Mammary epithelial cell (primary cell): ENCODE measurements at regions of chr1 and their contacts with region 1.

Region 1: GRCh38 chr1:47934243-47934805 is 62.9 kb downstream of the TRABD2B start:
- DNase-seq: no peak
- H3K4me3 ChIP-seq: no peak overlapping the region
- H3K27ac ChIP-seq: no peak overlapping the region
- H3K4me1 ChIP-seq: peaks cover 4% of the 10 kb centered on the region
- H3K27me3 ChIP-seq: no peaks in the 10 kb centered on the region
- CTCF ChIP-seq: no peak

Region 2: DNA sequence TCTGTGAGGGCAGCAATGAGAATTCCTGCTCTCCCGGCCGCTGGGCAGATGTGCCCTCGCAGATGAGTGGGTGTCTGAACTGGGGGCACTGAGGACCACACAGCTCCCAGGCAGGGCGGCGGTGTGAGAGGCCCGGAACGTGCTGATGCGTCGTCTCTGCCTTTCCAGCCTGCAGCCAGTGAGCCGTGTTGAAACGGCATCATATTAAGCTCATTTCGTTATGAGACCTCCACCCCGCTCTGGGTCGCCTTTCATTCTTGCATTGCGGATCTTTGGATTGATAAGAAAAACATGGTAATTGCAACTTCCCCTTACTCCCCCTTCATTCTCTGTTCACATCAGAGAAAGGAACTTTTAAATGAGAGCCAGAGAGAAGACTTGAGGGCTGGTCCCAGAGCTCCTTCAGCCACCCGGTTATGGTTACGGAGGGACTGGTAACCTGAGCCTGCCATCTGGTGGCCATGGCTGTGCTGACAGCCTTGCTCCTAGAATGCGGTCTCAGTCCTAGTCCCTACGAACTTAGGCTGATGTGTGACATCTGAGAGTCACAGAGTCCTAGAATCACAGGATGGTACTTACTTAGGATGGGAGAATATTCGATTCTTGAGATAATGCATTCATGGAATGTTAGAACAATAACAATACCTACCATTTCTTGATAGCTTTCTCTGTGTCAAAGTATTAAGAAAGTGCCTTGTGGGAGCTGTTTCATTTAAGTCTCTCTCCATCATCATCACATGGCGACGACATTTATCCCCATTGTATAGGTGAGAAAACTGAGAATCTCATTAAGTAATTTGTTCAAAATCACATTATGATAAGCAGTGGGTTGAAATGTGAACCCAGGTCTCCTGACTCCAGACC is 208.1 kb before region 1 on chr1:
- CTCF ChIA-PET with region 1: interaction called, 4 read pairs
- dilution Hi-C with region 1: no loop called
- in situ Hi-C with region 1: loop called (anchors 10 to 25 kb)
- intact Hi-C with region 1: no loop called
- DNase-seq: peak; percentile 58
- H3K4me3 ChIP-seq: peak overlapping the region in 1 of 3 experiments; percentile 8
- H3K27ac ChIP-seq: no peak overlapping the region
- H3K4me1 ChIP-seq: peaks cover 20% of the 10 kb centered on the region
- H3K27me3 ChIP-seq: no peaks in the 10 kb centered on the region
- CTCF ChIP-seq: peak; percentile 94

Region 3: GRCh38 chr1:47738560-47739182 is 195.7 kb before region 1 on chr1:
- CTCF ChIA-PET with region 1: interaction called, 7 read pairs
- dilution Hi-C with region 1: no loop called
- in situ Hi-C with region 1: loop called (anchors 10 to 25 kb)
- intact Hi-C with region 1: loop called (anchors 1 kb)
- DNase-seq: peak; percentile 32
- H3K4me3 ChIP-seq: no peak overlapping the region
- H3K27ac ChIP-seq: no peak overlapping the region
- H3K4me1 ChIP-seq: no peaks in the 10 kb centered on the region
- H3K27me3 ChIP-seq: no peaks in the 10 kb centered on the region
- CTCF ChIP-seq: peak; percentile 76 to 89

Region 4: DNA sequence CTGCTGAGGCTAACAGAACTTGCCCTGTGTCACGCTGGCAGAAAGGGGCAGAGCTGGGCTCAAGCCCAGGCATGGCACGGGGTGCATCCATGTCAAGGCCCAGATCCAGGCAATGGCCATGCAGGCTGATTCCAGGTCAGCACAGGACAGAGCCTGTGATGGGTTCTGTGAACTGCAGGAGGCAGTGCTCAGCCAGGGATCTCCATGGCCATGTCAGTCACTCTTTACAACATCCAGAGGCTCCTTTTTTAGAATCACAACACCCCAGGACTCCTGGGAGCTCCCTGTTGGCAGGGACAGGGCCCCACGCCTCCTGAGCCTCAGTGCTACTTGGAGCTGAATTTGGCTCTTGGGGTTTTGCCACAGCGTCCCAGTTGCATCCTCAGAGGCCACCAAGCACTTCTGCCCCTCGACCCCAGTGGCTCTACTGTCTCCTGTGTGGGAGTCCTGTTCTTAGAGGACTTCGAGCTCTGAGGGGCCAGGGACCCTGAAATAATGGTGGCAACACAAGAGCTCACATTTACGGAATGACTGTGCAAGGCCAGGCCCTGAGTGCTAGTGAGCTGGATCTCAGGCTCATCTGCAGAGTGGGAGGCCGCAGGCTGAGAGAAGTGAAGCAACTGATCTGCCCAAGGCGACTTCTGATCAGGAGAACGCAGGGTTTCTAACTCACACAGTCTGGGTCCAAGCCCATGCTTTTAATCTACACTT is 148.6 kb before region 1 on chr1:
- CTCF ChIA-PET with region 1: no interaction called
- dilution Hi-C with region 1: no loop called
- in situ Hi-C with region 1: no loop called
- intact Hi-C with region 1: loop called (anchors 1 kb)
- DNase-seq: peak; percentile 6
- H3K4me3 ChIP-seq: no peak overlapping the region
- H3K27ac ChIP-seq: no peak overlapping the region
- H3K4me1 ChIP-seq: no peaks in the 10 kb centered on the region
- H3K27me3 ChIP-seq: no peaks in the 10 kb centered on the region
- CTCF ChIP-seq: peak; percentile 22 to 52